Sigmoid colon (tissue), 7 donors: ENCODE measurements at regions of chr2 and their contacts with region 1.

Region 1: GRCh38 chr2:135741395-135742324 is at the start of gene UBXN4:
- DNase-seq: peak; percentile 99
- H3K4me3 ChIP-seq: peak within 1 kb of the TSS; percentile 79 to 98 (median 94)
- H3K27ac ChIP-seq: peak within 1 kb of the TSS; percentile 89 to 100 (median 100)
- H3K4me1 ChIP-seq: peaks cover 0 to 38% (median 32%) of the 10 kb centered on the region in 4 donors
- H3K27me3 ChIP-seq: no peaks in the 10 kb centered on the region
- CTCF ChIP-seq: peak in 1 of 4 experiments; percentile 22
- EP300 ChIP-seq: no peak
- POLR2A ChIP-seq: peak; percentile 66 to 89
- total RNA-seq, gene UBXN4: 51.8 to 63.3 (median 59.8) TPM

Region 2: DNA sequence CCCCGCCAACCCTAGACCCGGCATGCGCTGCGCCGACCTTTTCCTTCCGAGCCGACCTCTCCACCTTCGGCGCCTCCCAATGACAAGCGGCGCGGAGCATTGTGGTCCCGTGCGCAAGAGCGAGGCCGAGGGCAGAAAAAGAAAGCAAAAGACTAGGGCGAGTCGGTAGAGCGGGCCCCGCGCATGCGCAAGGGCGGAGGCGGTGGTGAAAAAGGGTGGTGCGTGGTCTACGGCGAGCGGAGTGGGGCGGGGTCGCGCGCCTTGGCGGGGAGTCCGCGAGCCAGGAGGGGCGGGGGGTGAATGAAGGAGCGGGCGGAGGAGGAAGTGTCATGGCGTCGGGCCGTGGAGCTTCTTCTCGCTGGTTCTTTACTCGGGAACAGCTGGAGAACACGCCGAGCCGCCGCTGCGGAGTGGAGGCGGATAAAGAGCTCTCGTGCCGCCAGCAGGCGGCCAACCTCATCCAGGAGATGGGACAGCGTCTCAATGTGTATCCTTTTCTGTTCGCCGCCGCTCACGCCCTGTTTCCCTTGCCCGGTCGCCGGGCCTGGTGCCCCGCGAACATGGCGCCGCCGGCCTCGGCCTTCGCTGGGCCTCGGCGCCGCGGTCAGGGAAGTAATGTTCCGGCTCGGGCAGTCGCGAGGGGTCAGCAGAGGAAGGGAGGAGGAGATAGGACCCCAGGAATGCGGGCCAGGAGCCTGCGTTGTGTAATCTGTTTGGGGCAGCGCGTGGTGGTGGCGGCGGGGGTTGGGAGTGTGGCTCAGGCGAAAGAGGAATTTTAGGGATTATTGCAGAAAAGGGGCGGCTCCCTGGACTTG is 822.9 kb before region 1 on chr2 and contains the start of gene CCNT2:
- intact Hi-C with region 1: loop called (anchors 2 kb)
- DNase-seq: peak; percentile 99
- H3K4me3 ChIP-seq: peak within 1 kb of the TSS; percentile 89 to 96 (median 92)
- H3K27ac ChIP-seq: peak within 1 kb of the TSS; percentile 96 to 98 (median 98)
- H3K4me1 ChIP-seq: peaks cover 0 to 49% (median 40%) of the 10 kb centered on the region in 4 donors
- H3K27me3 ChIP-seq: no peaks in the 10 kb centered on the region
- CTCF ChIP-seq: no peak
- EP300 ChIP-seq: peak in 1 of 4 donors; percentile 78
- POLR2A ChIP-seq: no peak
- total RNA-seq, gene CCNT2: 27.4 to 33.2 (median 32.1) TPM

Region 3: GRCh38 chr2:135052042-135052876 is 689.4 kb before region 1 on chr2 and contains the start of gene RAB3GAP1:
- intact Hi-C with region 1: loop called (anchors 5 kb)
- DNase-seq: peak; percentile 80
- H3K4me3 ChIP-seq: peak within 1 kb of the TSS; percentile 65 to 78 (median 76)
- H3K27ac ChIP-seq: peak within 1 kb of the TSS; percentile 90 to 95 (median 91)
- H3K4me1 ChIP-seq: peaks cover 0 to 40% (median 30%) of the 10 kb centered on the region in 4 donors
- H3K27me3 ChIP-seq: no peaks in the 10 kb centered on the region
- CTCF ChIP-seq: no peak
- EP300 ChIP-seq: no peak
- POLR2A ChIP-seq: peak in 1 of 2 donors; percentile 50
- total RNA-seq, gene RAB3GAP1: 54.5 to 70.2 (median 60.9) TPM

Region 4: DNA sequence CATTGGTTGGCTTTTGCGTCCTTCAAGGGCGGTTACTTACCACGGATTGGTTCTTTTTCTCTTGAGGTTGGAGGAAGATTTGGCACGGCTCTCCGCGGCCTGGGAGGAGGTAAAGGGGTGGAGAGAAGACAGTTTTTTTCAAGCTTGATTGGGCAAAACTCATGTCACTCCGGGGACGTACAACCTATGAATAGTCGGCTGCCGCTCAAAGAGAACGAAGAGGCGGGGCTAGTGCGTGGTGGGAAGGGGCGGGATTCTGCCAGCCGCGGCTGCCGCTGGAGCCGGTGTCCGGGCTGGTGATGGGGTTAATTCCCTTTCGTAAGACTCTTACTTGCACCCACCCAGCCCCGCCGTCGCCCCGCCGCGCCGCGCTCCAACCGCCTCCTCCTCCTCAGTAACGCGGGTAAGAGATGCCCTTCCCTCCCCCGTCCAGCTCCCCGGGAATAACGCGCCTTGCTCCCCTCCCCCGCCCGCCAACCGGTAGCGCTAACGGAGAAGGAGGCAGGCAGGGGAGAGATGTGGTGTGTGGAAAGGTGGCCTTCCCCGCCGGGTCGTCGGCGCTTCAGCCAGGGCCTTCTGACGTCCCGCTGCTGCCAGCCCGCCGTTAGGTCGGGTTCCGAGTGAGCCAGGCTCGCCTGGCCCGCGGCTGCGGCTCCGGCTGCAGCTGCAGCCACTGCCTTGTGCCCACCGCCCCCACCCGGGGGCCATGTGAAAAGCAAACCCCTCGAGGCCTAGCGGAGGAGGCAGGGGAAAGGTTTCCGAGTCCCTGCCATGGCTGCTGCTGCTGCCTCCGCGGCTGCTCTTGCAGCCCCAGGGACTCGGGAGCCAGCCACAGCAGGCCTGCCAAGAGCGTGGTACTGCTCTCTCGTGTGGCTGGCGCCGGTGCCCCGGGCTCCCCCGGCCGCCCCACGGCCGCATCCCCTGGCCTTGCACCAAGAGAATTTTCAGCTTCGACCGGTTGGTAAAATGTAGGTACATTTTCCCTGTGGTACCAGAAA is 210.1 kb before region 1 on chr2 and contains the start of gene R3HDM1:
- intact Hi-C with region 1: loop called (anchors 2 kb)
- DNase-seq: peak; percentile 100
- H3K4me3 ChIP-seq: peak within 1 kb of the TSS; percentile 64 to 98 (median 88)
- H3K27ac ChIP-seq: peak within 1 kb of the TSS; percentile 90 to 93 (median 92)
- H3K4me1 ChIP-seq: peaks cover 0 to 25% (median 6%) of the 10 kb centered on the region in 4 donors
- H3K27me3 ChIP-seq: no peaks in the 10 kb centered on the region
- CTCF ChIP-seq: peak in 1 of 4 experiments; percentile 2
- EP300 ChIP-seq: no peak
- POLR2A ChIP-seq: peak in 1 of 2 donors; percentile 6
- total RNA-seq, gene R3HDM1: 12.0 to 34.6 (median 15.8) TPM

Region 5: GRCh38 chr2:135676031-135676430 is 65.6 kb before region 1 on chr2:
- intact Hi-C with region 1: no loop called
- DNase-seq: no peak
- H3K4me3 ChIP-seq: no peak overlapping the region
- H3K27ac ChIP-seq: no peak overlapping the region
- H3K4me1 ChIP-seq: no peaks in the 10 kb centered on the region
- H3K27me3 ChIP-seq: no peaks in the 10 kb centered on the region
- CTCF ChIP-seq: no peak
- EP300 ChIP-seq: no peak
- POLR2A ChIP-seq: no peak

Region 6: GRCh38 chr2:135876066-135876711 is 134.5 kb after region 1 on chr2 and contains the start of gene MCM6:
- intact Hi-C with region 1: loop called (anchors 5 kb)
- DNase-seq: peak; percentile 98
- H3K4me3 ChIP-seq: peak within 1 kb of the TSS; percentile 50 to 96 (median 73)
- H3K27ac ChIP-seq: peak within 1 kb of the TSS; percentile 79 to 90 (median 88)
- H3K4me1 ChIP-seq: peaks cover 0 to 18% (median 13%) of the 10 kb centered on the region in 4 donors
- H3K27me3 ChIP-seq: no peaks in the 10 kb centered on the region
- CTCF ChIP-seq: peak in 1 of 4 experiments; percentile 12
- EP300 ChIP-seq: no peak
- POLR2A ChIP-seq: no peak
- total RNA-seq, gene MCM6: 7.5 to 9.9 (median 9.4) TPM

Region 7: GRCh38 chr2:135985018-135985825 is 243.6 kb after region 1 on chr2 and contains the start of gene DARS1:
- intact Hi-C with region 1: loop called (anchors 5 kb)
- DNase-seq: peak; percentile 95
- H3K4me3 ChIP-seq: peak within 1 kb of the TSS; percentile 78 to 96 (median 87)
- H3K27ac ChIP-seq: peak within 1 kb of the TSS; percentile 86 to 99 (median 90)
- H3K4me1 ChIP-seq: peaks cover 0 to 39% (median 17%) of the 10 kb centered on the region in 4 donors
- H3K27me3 ChIP-seq: no peaks in the 10 kb centered on the region
- CTCF ChIP-seq: no peak
- EP300 ChIP-seq: peak in 1 of 4 donors; percentile 38
- POLR2A ChIP-seq: peak; percentile 40 to 58
- total RNA-seq, gene DARS1: 77.3 to 95.6 (median 81.5) TPM

Region 8: DNA sequence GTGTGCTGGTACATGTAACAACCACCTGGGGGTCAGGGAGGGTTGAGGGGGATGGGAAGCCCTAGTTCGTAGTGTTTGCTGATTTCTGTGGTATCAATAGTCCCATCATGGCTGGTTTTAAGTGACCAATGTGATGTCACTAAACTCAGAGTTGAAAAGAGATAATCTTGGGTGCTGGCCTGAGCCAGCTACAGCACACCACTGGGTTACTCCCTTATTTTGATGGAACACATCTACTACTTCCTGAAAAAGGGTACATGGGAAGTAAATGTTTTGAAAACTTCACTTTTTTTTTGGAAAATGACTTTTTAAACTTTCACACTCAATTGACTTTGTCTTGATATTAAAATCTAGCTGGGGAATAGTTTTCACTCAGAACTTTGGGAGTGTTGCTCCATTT is 463.3 kb after region 1 on chr2:
- intact Hi-C with region 1: no loop called
- DNase-seq: no peak
- H3K4me3 ChIP-seq: no peak overlapping the region
- H3K27ac ChIP-seq: peak overlapping the region in 1 of 4 donors; percentile 18
- H3K4me1 ChIP-seq: no peaks in the 10 kb centered on the region
- H3K27me3 ChIP-seq: no peaks in the 10 kb centered on the region
- CTCF ChIP-seq: no peak
- EP300 ChIP-seq: no peak
- POLR2A ChIP-seq: no peak